Activated T-helper 1 cell treated with anti-CD3 and anti-CD28 coated beads, Interleukin-12 subunit alpha, Interleukin-12 subunit beta, Interleukin-2, Interleukin-4 antibody, amounts not matched to agents 30 ng/mL and 10 ng/mL and 1 ng/mL, durations not matched to agents 14 hours and 24 hours and 36 hours (primary cell): ENCODE measurements at regions of chr17 and their contacts with region 1.

Region 1: GRCh38 chr17:77331301-77331864 is 190.6 kb downstream of the SEC14L1 start:
- DNase-seq: peak; percentile 90
- H3K4me3 Mint-ChIP-seq: peak overlapping the region; percentile 73
- H3K27ac Mint-ChIP-seq: peak overlapping the region; percentile 86
- H3K4me1 Mint-ChIP-seq: peaks cover 42% of the 10 kb centered on the region
- H3K27me3 Mint-ChIP-seq: peaks cover 2% of the 10 kb centered on the region

Region 2: DNA sequence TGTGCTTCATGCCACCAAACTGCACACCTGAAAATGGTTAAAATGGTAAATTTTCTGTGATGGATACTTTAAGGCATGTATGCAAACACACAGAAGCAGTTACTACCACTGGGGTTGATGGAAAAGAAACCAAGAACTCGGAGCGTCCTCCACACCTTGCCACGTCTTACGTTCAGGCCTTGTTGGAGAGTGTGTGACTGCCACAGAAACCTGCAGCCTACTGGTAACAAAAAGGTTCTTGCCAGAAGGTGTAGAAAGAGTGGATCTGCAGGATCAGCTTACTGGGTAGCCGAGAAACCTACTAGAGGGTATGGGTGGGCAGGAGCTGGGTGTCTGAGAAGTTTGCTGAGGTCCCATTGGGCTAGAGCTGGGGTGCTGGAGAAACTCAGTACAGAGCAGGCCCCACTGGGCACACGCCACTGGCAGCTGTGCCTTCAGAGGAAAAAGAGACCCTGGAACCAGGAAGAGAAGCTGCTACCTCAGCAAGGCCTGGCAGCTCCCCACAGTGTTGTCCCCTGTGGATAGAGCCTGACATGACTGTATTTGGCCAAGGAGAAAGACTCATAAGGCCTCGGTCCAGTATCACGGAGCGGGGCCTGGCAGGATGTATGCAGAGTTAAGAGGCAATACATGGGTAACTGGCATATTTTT is 14.0 kb after region 1 on chr17:
- intact Hi-C with region 1: loop called (anchors 1 kb)
- DNase-seq: no peak
- H3K4me3 Mint-ChIP-seq: no peak overlapping the region
- H3K27ac Mint-ChIP-seq: no peak overlapping the region
- H3K4me1 Mint-ChIP-seq: peaks cover 45% of the 10 kb centered on the region
- H3K27me3 Mint-ChIP-seq: peaks cover under 1% of the 10 kb centered on the region

Region 3: DNA sequence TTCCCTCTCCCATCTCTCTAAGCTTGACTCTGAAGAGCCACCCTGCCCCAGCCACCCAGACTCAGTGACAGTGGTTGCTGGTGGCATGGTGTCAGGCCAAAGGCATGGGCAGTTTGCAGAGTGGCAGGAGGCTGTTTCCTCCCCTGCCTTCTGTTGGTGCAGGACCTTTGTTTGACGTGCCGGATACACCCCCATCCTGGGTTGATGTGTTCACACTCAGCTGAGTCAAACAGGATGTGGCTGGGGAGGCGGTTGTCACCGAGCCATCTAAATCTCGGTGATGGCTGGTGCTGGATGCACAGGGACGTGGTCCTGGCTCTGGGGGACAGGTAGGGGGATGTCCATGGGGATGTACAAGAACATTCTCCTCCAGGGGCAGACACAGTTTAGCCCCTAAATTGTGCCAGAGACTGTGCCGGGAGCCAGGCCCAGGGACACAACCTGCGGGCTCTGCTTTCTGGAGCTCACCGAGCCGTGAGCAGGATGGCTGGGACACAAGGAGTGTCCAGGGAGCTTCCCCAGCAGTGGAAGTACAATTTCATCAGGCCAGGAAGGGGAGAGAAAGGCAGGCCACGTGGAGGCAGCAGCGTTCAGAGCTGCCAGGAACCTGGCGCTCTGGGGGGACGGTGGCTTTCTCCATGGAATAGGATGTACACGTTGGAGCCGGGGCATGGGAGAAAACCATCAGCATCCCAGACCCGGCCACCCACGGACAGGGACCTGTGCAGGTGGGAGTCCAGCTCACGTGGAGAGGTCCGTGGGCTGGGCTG is 73.6 kb after region 1 on chr17:
- intact Hi-C with region 1: loop called (anchors 1 kb)
- DNase-seq: peak; percentile 83
- H3K4me3 Mint-ChIP-seq: peak overlapping the region; percentile 92
- H3K27ac Mint-ChIP-seq: peak overlapping the region; percentile 92
- H3K4me1 Mint-ChIP-seq: peaks cover 88% of the 10 kb centered on the region
- H3K27me3 Mint-ChIP-seq: no peaks in the 10 kb centered on the region

Region 4: DNA sequence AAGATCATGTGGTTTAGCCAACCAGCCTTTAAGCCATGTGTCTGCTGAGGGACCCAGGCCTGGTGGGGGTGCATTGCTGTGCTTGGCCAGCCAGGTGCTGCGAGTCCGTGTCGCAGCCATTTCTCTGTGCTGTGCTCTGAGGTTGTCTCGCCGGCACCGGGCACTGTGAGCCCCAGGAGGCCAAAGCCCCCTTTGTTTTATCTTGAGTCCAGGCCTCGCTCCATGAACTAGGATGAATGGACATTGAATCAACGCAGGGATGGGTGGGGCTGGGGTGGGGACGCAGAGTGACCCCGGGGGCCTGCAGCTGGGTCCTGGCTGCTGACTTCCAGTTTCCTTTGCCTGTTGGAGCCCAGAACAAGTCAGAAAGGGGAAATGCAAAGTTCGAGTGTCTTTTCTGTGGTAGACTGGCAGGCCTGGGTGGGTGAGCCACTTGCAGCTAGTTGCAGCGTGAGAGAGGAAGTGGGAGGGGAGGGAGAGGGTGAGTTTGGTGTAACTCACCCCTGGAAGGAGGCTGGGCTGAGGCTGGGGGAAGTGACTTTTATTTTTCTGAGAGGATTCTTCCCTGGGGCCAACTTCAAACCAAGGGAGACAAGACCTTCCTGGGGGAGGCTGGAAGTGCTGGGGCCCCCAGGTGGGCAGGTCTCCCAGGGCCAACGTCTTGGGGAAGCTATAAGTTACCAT is 134.1 kb after region 1 on chr17:
- intact Hi-C with region 1: loop called (anchors 1 kb)
- DNase-seq: peak; percentile 72
- H3K4me3 Mint-ChIP-seq: peak overlapping the region; percentile 59
- H3K27ac Mint-ChIP-seq: peak overlapping the region; percentile 89
- H3K4me1 Mint-ChIP-seq: peaks cover 77% of the 10 kb centered on the region
- H3K27me3 Mint-ChIP-seq: no peaks in the 10 kb centered on the region

Region 5: DNA sequence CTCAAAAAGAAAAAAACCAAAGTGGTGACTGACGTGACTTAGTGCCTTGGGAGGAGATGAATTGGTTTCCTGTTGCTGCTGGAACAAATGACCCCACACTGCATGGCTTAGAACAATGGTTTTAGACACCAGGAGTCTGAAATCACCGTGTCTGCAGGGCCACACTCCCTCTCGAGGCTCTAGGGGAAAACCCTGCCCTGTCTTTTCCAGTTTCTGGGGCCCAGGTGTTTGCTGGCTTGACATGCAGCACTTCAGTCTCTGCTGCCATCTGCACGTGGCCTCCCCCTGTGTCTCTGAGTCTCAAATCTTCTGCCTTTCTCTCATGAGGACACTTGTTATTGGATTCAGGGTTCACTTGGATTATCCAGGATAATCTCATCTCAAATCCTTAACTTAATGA is 303.3 kb after region 1 on chr17:
- intact Hi-C with region 1: no loop called
- DNase-seq: peak; percentile 30
- H3K4me3 Mint-ChIP-seq: no peak overlapping the region
- H3K27ac Mint-ChIP-seq: peak overlapping the region; percentile 68
- H3K4me1 Mint-ChIP-seq: peaks cover 20% of the 10 kb centered on the region
- H3K27me3 Mint-ChIP-seq: peaks cover 2% of the 10 kb centered on the region

Region 6: GRCh38 chr17:77666881-77667395 is 335.6 kb after region 1 on chr17:
- intact Hi-C with region 1: loop called (anchors 5 kb)
- DNase-seq: peak; percentile 77
- H3K4me3 Mint-ChIP-seq: peak overlapping the region; percentile 88
- H3K27ac Mint-ChIP-seq: peak overlapping the region; percentile 97
- H3K4me1 Mint-ChIP-seq: peaks cover 35% of the 10 kb centered on the region
- H3K27me3 Mint-ChIP-seq: no peaks in the 10 kb centered on the region

Region 7: DNA sequence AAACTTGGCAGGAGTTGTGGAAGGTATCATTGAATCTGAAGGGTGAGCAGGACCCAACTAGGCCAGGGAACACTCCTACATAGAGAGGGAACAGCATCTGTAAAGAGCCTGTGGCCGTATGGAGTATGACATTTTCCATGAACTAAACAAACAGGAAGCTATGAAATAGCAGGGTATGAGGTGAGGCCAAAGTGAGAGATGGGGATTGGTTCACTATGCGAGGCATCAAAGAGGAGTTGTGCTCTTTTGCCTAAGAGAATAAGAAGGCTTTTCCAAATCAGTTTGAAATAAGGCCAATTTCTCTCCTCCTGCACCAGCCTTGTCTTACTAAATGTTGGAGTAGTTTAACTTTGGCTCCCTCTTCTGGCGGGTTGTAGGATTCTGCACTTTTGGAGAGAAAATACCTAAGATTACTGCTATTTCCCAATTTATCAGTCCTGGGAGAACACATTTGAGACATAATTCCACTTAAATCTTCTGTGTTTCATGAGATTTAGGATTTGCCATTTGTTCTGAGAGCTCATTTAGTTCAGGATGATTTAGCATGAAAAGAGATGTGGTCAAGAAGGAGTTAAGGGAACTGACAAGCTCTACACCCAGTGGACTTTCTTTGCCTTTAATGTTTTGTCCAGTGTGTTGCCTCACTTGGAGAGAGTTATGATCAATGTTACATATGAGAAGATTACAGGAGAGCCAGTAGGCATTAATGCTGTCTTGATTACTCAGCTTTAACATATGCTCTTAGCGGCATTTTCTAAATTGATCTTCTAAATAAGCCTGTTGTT is 682.5 kb after region 1 on chr17:
- intact Hi-C with region 1: loop called (anchors 5 kb)
- DNase-seq: peak; percentile 21
- H3K4me3 Mint-ChIP-seq: no peak overlapping the region
- H3K27ac Mint-ChIP-seq: no peak overlapping the region
- H3K4me1 Mint-ChIP-seq: peaks cover 22% of the 10 kb centered on the region
- H3K27me3 Mint-ChIP-seq: no peaks in the 10 kb centered on the region